ENCODE measurements at regions of chr6 and their contacts with region 1.

Region 1: DNA sequence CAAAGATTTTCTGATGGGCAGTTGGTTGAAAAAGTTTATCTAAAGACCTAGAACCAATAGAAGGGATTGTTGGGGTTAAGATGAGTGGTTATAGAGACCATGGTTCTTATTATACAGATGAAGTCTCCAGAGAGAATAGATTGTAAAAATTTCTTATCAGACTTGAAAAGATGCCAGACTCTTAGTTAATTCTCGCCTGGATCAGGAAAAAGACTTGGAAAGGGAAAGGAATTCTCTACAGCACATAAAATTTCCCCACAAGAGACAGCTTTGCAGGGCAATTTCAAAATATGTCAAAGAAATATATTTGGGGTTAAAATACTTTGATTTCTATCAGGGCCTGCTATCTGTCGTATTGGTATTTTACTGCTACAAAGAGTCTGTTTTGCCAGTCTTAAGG is 582.6 kb downstream of the UTRN start:
- DNase-seq: no peak
- ATAC-seq: no peak
- H3K4me3 Mint-ChIP-seq: no peak overlapping the region
- H3K27ac Mint-ChIP-seq: no peak overlapping the region
- H3K4me1 Mint-ChIP-seq: no peaks in the 10 kb centered on the region
- H3K27me3 Mint-ChIP-seq: peaks cover 18% of the 10 kb centered on the region

Region 2: GRCh38 chr6:144647971-144648651 is 219.7 kb before region 1 on chr6:
- CTCF ChIA-PET with region 1: no interaction called
- POLR2A ChIA-PET with region 1: no interaction called
- intact Hi-C with region 1: no loop called
- DNase-seq: no peak
- ATAC-seq: no peak
- H3K4me3 Mint-ChIP-seq: no peak overlapping the region
- H3K27ac Mint-ChIP-seq: no peak overlapping the region
- H3K4me1 Mint-ChIP-seq: peaks cover 6% of the 10 kb centered on the region
- H3K27me3 Mint-ChIP-seq: no peaks in the 10 kb centered on the region

Region 3: GRCh38 chr6:144811140-144811539 is 56.6 kb before region 1 on chr6:
- CTCF ChIA-PET with region 1: no interaction called
- POLR2A ChIA-PET with region 1: no interaction called
- intact Hi-C with region 1: no loop called
- DNase-seq: no peak
- ATAC-seq: no peak
- H3K4me3 Mint-ChIP-seq: no peak overlapping the region
- H3K27ac Mint-ChIP-seq: no peak overlapping the region
- H3K4me1 Mint-ChIP-seq: no peaks in the 10 kb centered on the region
- H3K27me3 Mint-ChIP-seq: no peaks in the 10 kb centered on the region

Region 4: GRCh38 chr6:144897441-144897921 is 29.7 kb after region 1 on chr6:
- CTCF ChIA-PET with region 1: no interaction called
- POLR2A ChIA-PET with region 1: no interaction called
- intact Hi-C with region 1: loop called in 1 of 2 experiments (anchors 2 kb)
- DNase-seq: no peak
- ATAC-seq: no peak
- H3K4me3 Mint-ChIP-seq: no peak overlapping the region
- H3K27ac Mint-ChIP-seq: no peak overlapping the region
- H3K4me1 Mint-ChIP-seq: no peaks in the 10 kb centered on the region
- H3K27me3 Mint-ChIP-seq: peaks cover 2% of the 10 kb centered on the region

Measured in activated CD4-positive, alpha-beta T cell treated with anti-CD3 and anti-CD28 coated beads for 36 hours (primary cell).